Pancreas (tissue), 10 donors: ENCODE measurements at regions of chr20 and their contacts with region 1.

Region 1: GRCh38 chr20:12207875-12208274 is 290.2 kb downstream of the BTBD3 start:
- DNase-seq: peak in 3 of 6 donors; percentile 12 to 51 (median 22)
- ATAC-seq: peak in 3 of 4 donors; percentile 64 to 81 (median 80)
- H3K4me3 ChIP-seq: no peak overlapping the region
- H3K27ac ChIP-seq: no peak overlapping the region
- H3K4me1 ChIP-seq: no peaks in the 10 kb centered on the region
- H3K27me3 ChIP-seq: no peaks in the 10 kb centered on the region
- CTCF ChIP-seq: peak; percentile 45 to 63 (median 58)

Region 2: GRCh38 chr20:12012241-12013222 is 195.3 kb before region 1 on chr20:
- intact Hi-C with region 1: loop called in 1 of 3 experiments (anchors 10 kb)
- DNase-seq: peak in 4 of 6 donors; percentile 20 to 73 (median 43)
- ATAC-seq: peak; percentile 95 to 100 (median 99)
- H3K4me3 ChIP-seq: peak overlapping the region in 1 of 4 donors; percentile 8
- H3K27ac ChIP-seq: no peak overlapping the region
- H3K4me1 ChIP-seq: peaks cover 0 to 4% (median 0%) of the 10 kb centered on the region in 3 donors
- H3K27me3 ChIP-seq: no peaks in the 10 kb centered on the region
- CTCF ChIP-seq: peak; percentile 82 to 95 (median 88)